Activated CD4-positive, alpha-beta T cell treated with anti-CD3 and anti-CD28 coated beads for 36 hours (primary cell): ENCODE measurements at regions of chr22 and their contacts with region 1.

Region 1: GRCh38 chr22:30356449-30357235 is at the starts of genes CCDC157 and SF3A1:
- DNase-seq: peak; percentile 94
- ATAC-seq: peak; percentile 93
- H3K4me3 Mint-ChIP-seq: peak within 1 kb of the TSS; percentile 92
- H3K27ac Mint-ChIP-seq: peak within 1 kb of the TSS; percentile 90
- H3K4me1 Mint-ChIP-seq: peaks cover 48% of the 10 kb centered on the region
- H3K27me3 Mint-ChIP-seq: no peaks in the 10 kb centered on the region
- total RNA-seq, gene CCDC157: 2.4 to 3.7 TPM
- total RNA-seq, gene SF3A1: 254 to 499 TPM

Region 2: DNA sequence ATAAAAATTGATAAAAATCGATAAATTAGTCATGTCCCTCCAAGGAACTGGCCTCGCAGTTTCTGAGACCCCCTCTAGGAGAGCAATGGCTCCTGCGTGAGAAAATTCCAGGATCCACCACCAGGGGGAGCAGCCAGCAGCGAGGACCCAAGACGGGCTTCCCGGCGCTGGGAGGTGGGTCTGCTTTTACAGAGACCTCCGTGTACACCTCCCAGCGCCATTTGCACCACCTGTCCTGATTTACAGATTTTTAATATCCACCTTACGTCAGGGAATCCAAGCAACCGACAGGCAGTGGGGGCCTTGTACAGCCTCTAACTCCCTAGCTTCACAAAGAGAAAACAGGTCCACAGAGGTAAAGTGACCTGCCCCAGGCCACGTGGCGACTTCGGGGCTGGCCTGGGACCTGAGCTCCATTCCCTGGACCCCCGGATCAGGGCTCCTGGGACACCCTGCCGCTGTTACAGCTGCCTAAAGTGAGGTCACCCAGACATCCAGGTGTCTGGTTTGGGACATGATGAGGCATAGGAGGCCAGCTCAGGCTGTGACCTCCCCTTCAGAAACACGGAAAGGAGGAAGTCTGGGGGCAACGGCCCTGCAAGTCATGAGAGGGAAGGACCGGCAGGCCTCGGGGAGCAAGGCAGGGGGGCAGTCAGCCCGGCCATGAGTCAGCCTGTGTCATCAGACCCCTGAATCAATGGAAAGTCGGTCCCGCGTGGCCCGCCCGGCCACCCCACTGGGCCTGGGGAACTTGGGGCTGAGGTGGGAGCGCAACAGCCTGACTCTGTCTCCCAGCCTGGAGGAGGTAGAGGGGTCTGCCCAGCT is 93.5 kb before region 1 on chr22:
- CTCF ChIA-PET with region 1: no interaction called
- POLR2A ChIA-PET with region 1: interaction called, 6 read pairs
- intact Hi-C with region 1: loop called in 1 of 2 experiments (anchors 1 kb)
- DNase-seq: peak; percentile 88
- ATAC-seq: no peak
- H3K4me3 Mint-ChIP-seq: peak overlapping the region; percentile 62
- H3K27ac Mint-ChIP-seq: peak overlapping the region; percentile 51
- H3K4me1 Mint-ChIP-seq: peaks cover 33% of the 10 kb centered on the region
- H3K27me3 Mint-ChIP-seq: no peaks in the 10 kb centered on the region

Region 3: GRCh38 chr22:30305519-30305905 is 51.1 kb before region 1 on chr22:
- CTCF ChIA-PET with region 1: interaction called, 6 read pairs
- POLR2A ChIA-PET with region 1: no interaction called
- intact Hi-C with region 1: loop called in 1 of 2 experiments (anchors 1 kb)
- DNase-seq: peak; percentile 68
- ATAC-seq: peak; percentile 79
- H3K4me3 Mint-ChIP-seq: peak overlapping the region; percentile 59
- H3K27ac Mint-ChIP-seq: peak overlapping the region; percentile 85
- H3K4me1 Mint-ChIP-seq: peaks cover 97% of the 10 kb centered on the region
- H3K27me3 Mint-ChIP-seq: no peaks in the 10 kb centered on the region

Region 4: DNA sequence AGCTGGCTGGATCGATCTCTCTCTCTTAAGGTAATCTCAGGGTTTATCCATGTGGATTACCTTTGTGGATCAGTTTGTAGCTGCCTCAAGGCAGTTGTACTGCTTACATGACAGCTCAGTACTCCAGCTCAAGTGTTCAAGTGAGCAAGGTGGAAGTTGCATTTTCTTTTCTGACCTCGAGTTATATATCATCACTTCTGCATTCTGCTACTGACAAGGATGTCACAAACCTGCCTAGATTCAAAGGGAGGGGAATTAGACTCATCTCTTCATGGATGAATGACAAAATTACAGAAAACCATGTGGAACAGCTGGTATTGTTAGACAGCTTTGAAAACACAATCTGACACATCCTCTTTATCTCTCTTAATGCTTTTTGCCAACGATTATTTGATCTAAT is 244.3 kb after region 1 on chr22:
- CTCF ChIA-PET with region 1: no interaction called
- POLR2A ChIA-PET with region 1: no interaction called
- intact Hi-C with region 1: no loop called
- DNase-seq: no peak
- ATAC-seq: no peak
- H3K4me3 Mint-ChIP-seq: no peak overlapping the region
- H3K27ac Mint-ChIP-seq: no peak overlapping the region
- H3K4me1 Mint-ChIP-seq: peaks cover 6% of the 10 kb centered on the region
- H3K27me3 Mint-ChIP-seq: no peaks in the 10 kb centered on the region